ENCODE measurements at regions of chr1 and their contacts with region 1.

Region 1: GRCh38 chr1:116737020-116737854 is 17.0 kb upstream of the CD2 start:
- DNase-seq: peak; percentile 86
- ATAC-seq: peak; percentile 60
- H3K4me3 Mint-ChIP-seq: peak overlapping the region; percentile 76
- H3K27ac Mint-ChIP-seq: peak overlapping the region; percentile 100
- H3K4me1 Mint-ChIP-seq: peaks cover 68% of the 10 kb centered on the region
- H3K27me3 Mint-ChIP-seq: no peaks in the 10 kb centered on the region
- CTCF ChIP-seq: peak; percentile 91

Region 2: DNA sequence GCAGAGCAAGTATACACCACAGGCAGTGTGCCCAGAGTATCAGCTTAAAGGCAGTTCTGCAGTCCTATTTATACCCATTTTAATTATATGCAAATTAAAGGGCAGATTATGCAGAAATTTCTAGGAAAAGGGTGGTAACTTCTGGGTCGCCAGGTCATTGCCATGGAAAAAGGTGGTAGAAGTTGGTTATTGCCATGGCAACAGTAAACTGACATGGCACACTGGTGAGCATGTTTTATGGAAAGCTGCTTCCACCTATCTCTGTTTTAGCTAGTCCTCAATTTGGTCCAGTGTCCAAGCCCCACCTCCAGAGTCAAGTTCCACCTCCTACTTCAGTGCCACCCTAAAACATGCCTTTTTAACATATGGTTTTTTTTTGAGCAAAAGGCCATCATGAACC is 12.1 kb after region 1 on chr1:
- CTCF ChIA-PET with region 1: interaction called, 102 read pairs
- POLR2A ChIA-PET with region 1: interaction called, 243 read pairs
- intact Hi-C with region 1: loop called (anchors 1 kb)
- DNase-seq: no peak
- ATAC-seq: no peak
- H3K4me3 Mint-ChIP-seq: no peak overlapping the region
- H3K27ac Mint-ChIP-seq: no peak overlapping the region
- H3K4me1 Mint-ChIP-seq: peaks cover 23% of the 10 kb centered on the region
- H3K27me3 Mint-ChIP-seq: no peaks in the 10 kb centered on the region
- CTCF ChIP-seq: no peak

Region 3: DNA sequence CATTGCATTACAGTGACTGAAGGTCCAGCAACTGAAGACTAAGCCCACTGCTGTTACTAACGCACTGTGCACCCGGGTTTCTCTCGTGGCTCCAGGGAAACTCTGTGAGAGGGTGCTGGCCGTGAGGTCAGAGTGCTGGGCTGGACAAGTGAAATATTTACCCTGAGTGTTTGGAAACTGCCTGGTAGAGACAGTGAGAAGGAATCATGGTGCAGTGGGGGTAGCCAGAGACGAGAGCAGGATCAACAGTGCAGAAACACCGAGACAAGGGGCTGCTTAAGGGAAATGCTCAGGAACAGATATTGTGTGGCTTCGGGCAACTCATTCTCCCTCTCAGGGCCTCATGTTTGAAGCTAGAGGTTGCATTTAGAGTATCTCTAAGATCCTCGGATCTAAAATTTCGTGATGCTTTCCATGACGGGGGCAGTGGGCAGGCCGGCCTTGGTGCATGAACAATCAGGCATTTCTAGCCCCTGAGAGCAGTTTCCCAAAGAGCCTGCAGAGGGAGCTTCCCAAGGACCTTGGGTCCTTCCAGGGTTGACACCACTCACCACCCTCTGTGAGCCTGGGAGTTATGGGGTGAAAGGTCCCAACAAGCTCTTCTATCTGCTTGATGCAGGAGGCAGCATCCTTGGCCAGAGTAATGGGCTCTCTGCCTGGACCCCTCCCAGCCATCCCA is 26.7 kb after region 1 on chr1:
- CTCF ChIA-PET with region 1: interaction called, 114 read pairs
- POLR2A ChIA-PET with region 1: interaction called, 850 read pairs
- intact Hi-C with region 1: loop called (anchors 2 kb)
- DNase-seq: peak; percentile 86
- ATAC-seq: peak; percentile 21
- H3K4me3 Mint-ChIP-seq: peak overlapping the region; percentile 98
- H3K27ac Mint-ChIP-seq: peak overlapping the region; percentile 99
- H3K4me1 Mint-ChIP-seq: peaks cover 83% of the 10 kb centered on the region
- H3K27me3 Mint-ChIP-seq: no peaks in the 10 kb centered on the region
- CTCF ChIP-seq: peak; percentile 39

Region 4: GRCh38 chr1:116806245-116806644 is 69.0 kb after region 1 on chr1:
- CTCF ChIA-PET with region 1: interaction called, 13 read pairs
- POLR2A ChIA-PET with region 1: interaction called, 24 read pairs
- intact Hi-C with region 1: no loop called
- DNase-seq: peak; percentile 93
- ATAC-seq: peak; percentile 68
- H3K4me3 Mint-ChIP-seq: peak overlapping the region; percentile 94
- H3K27ac Mint-ChIP-seq: peak overlapping the region; percentile 91
- H3K4me1 Mint-ChIP-seq: peaks cover 78% of the 10 kb centered on the region
- H3K27me3 Mint-ChIP-seq: no peaks in the 10 kb centered on the region
- CTCF ChIP-seq: no peak

Region 5: GRCh38 chr1:116826818-116827606 is 89.8 kb after region 1 on chr1:
- CTCF ChIA-PET with region 1: interaction called, 9 read pairs
- POLR2A ChIA-PET with region 1: interaction called, 31 read pairs
- intact Hi-C with region 1: no loop called
- DNase-seq: peak; percentile 90
- ATAC-seq: peak; percentile 91
- H3K4me3 Mint-ChIP-seq: peak overlapping the region; percentile 76
- H3K27ac Mint-ChIP-seq: peak overlapping the region; percentile 97
- H3K4me1 Mint-ChIP-seq: peaks cover 55% of the 10 kb centered on the region
- H3K27me3 Mint-ChIP-seq: no peaks in the 10 kb centered on the region
- CTCF ChIP-seq: no peak

Measured in activated CD8-positive, alpha-beta T cell treated with anti-CD3 and anti-CD28 coated beads for 36 hours (primary cell).